ENCODE measurements at regions of chr6 and their contacts with region 1.

Region 1: DNA sequence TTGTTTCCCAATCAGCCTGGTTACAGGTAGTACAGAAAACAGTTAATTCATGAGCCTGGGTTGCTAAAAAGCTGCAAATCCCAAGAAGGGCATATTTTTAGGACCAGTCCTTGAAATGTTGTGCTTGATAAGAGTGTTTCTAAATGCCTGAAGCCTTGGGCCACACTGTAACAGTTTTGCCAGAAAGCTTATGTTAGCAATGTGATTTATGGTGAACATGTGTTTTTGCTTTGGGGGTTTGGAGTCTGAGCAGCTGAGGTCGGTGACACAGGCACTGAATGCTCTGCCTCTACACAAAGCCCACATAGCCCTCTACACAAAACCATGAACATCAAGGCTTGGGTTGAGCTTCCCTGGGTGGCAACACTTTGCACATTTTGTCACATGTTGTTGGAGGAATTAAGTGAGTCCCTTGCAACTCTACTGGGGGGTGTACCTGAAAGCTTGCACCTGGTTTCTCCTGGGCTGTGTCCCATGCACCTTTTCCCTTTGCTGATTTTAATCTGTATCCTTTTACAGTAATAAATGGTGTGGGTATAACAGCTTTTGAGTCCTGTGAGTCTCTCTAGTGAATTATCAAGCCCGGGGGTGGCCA is 22.2 kb downstream of the AHI1 start:
- DNase-seq: no peak
- H3K4me3 Mint-ChIP-seq: no peak overlapping the region
- H3K27ac Mint-ChIP-seq: no peak overlapping the region
- H3K4me1 Mint-ChIP-seq: no peaks in the 10 kb centered on the region
- H3K27me3 Mint-ChIP-seq: no peaks in the 10 kb centered on the region
- CTCF ChIP-seq: no peak

Region 2: DNA sequence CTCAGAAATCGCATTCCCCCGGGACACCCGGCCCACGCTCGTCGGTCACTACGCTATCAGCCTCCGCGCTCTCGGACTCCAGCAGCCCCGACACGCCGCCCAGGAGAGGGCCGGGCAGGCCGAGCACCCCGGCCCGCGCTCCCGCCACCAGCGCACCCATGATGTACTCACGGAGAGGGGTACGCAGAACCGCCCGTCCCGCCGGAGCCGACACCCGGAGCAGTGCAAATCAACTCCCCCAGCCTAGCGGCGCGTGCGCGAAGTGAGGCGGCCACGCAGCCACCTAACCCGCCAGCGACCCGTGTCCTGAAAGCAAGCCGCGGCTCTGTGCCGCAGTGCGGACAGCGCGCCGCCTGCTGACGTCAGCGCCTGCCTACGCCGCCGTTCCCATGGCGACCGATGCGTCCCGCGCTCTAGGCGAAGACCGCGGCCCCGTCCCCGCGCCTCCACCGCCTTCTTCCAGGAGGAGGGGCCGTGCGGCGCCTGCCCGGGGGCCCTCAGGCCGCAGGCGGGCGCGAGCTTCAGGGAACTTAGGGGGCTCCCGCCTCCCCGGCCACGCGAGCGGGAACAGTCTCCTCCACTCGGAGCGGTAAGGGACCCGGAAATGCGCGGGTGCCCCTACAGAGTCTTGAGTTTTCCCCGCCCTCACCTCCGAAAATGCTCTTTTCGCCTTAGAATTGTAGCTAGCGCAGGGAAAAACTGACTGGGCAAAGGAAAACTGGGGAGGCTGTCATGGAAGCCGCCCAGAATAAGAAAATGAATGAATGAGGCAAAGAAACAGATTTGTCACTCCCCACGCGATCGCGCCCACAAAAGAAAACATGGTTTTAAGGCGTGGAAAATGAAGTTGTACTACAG is 22.3 kb after region 1 on chr6 and contains the start of gene AHI1:
- CTCF ChIA-PET with region 1: no interaction called
- intact Hi-C with region 1: loop called (anchors 2 kb)
- DNase-seq: peak; percentile 84
- H3K4me3 Mint-ChIP-seq: no peak within 1 kb of the TSS
- H3K27ac Mint-ChIP-seq: no peak within 1 kb of the TSS
- H3K4me1 Mint-ChIP-seq: no peaks in the 10 kb centered on the region
- H3K27me3 Mint-ChIP-seq: no peaks in the 10 kb centered on the region
- CTCF ChIP-seq: no peak
- total RNA-seq, gene AHI1: 18.0 and 19.8 TPM in 2 replicates

Measured in Calu3 (cell line).